Common myeloid progenitor, CD34-positive (primary cell): ENCODE measurements at regions of chr21 and their contacts with region 1.

Region 1: GRCh38 chr21:23968722-23969647 is 1638.3 kb downstream of the MRPL39 start:
- DNase-seq: peak; percentile 93 to 98 (median 98)
- H3K4me3 ChIP-seq: peak overlapping the region in 4 of 7 experiments; percentile 1 to 61 (median 24)
- H3K27ac ChIP-seq: no peak overlapping the region
- H3K4me1 ChIP-seq: peaks cover 2 to 15% (median 11%) of the 10 kb centered on the region in 4 experiments
- H3K27me3 ChIP-seq: peaks cover 0 to 33% (median 0%) of the 10 kb centered on the region in 5 experiments

Region 2: DNA sequence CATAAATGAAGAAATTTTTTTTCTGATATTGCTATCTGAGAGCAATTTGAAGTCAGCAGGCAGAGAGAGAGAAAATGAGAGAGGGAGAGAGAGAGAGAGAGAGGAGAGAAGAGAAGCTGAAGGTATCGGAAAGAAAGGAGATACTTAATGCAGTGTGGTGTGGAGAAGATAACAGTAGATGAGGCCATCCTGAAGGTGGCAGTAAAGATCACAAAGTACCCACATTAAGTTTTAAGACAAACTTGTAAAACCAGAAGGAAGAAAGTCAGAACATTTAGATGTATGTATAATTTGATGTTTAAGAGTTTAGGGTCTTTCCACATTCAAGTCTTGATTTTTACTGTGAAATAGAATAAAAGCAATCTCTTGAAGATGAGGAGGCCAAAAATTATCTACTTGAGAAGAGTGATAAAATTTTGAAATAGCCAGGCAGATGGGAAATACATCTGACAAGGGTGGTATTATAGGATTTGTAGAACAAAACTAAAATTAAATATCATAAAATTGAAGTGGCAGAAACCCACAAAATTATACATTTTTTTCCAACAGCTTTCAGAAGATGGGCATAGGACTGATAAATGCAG is 115.1 kb before region 1 on chr21:
- CTCF ChIA-PET with region 1: interaction called, 15 read pairs
- POLR2A ChIA-PET with region 1: no interaction called
- DNase-seq: peak; percentile 58 to 79 (median 73)
- H3K4me3 ChIP-seq: no peak overlapping the region
- H3K27ac ChIP-seq: no peak overlapping the region
- H3K4me1 ChIP-seq: no peaks in the 10 kb centered on the region
- H3K27me3 ChIP-seq: peaks cover 0 to 2% (median 0%) of the 10 kb centered on the region in 5 experiments

Region 3: DNA sequence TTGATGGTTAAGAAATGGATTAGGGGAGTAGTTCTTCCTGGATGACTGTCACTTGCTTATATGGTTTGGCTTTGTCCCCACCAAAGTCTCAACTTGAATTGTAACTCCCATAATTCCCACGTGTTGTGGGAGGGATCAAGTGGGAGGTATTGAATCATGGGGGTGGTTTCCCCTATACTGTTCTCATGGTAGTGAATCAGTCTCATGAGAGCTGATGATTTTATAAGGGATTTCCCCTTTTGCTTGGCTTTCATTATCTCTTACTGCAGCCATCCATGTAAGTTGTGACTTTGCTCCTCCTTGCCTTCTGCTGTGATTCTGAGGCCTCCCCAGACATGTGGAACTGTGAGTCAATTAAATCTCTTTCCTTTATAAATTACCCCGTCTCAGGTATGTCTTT is 17.2 kb after region 1 on chr21:
- CTCF ChIA-PET with region 1: no interaction called
- POLR2A ChIA-PET with region 1: no interaction called
- DNase-seq: no peak
- H3K4me3 ChIP-seq: no peak overlapping the region
- H3K27ac ChIP-seq: no peak overlapping the region
- H3K4me1 ChIP-seq: no peaks in the 10 kb centered on the region
- H3K27me3 ChIP-seq: peaks cover 5 to 60% (median 16%) of the 10 kb centered on the region in 5 experiments